Dorsolateral prefrontal cortex (tissue), 120 donors: ENCODE measurements at regions of chr5 and their contacts with region 1.

Region 1: DNA sequence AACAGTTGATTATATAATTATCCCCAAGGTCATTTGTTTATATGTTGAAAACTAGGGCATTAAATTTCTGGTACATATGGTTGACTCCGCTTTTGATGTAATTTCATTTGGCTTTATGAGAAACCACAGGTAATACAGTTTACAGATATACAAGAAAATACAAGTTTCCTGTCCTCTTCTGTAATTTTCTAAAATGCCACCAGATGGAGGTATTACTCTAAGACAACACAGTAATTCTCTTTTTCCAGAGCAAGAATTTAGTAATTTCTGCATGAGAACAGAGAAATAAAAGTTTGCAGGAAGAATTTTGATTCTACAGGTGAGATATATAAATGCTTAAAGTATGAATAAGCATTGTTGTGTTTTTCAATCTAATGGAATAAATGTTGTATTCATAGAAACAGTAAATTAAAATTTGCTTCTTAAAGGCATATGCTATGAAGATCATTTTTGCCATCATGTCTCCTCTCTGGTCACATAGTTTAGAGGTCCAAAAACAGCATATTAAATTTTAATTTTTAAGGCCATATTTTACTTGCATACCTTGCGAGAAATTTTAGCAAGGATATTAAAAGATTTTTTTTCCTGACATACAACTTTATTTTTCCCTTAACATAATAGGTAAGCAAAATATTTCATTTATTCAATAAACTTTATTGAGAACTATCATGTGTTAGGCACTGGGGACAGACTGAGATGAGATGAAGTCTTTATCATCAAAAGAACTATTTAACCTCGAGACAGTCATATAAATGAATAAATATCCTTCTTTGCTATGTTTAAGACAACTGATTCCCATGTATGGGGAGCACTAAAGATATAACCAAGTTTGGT is 22.7 kb downstream of the CHD1 start:
- DNase-seq: no peak
- H3K4me3 ChIP-seq: no peak overlapping the region
- H3K27ac ChIP-seq: peak overlapping the region in 1 of 59 donors; percentile 18
- H3K27me3 ChIP-seq: no peaks in the 10 kb centered on the region
- CTCF ChIP-seq: peak; percentile 67 to 97 (median 84)

Region 2: DNA sequence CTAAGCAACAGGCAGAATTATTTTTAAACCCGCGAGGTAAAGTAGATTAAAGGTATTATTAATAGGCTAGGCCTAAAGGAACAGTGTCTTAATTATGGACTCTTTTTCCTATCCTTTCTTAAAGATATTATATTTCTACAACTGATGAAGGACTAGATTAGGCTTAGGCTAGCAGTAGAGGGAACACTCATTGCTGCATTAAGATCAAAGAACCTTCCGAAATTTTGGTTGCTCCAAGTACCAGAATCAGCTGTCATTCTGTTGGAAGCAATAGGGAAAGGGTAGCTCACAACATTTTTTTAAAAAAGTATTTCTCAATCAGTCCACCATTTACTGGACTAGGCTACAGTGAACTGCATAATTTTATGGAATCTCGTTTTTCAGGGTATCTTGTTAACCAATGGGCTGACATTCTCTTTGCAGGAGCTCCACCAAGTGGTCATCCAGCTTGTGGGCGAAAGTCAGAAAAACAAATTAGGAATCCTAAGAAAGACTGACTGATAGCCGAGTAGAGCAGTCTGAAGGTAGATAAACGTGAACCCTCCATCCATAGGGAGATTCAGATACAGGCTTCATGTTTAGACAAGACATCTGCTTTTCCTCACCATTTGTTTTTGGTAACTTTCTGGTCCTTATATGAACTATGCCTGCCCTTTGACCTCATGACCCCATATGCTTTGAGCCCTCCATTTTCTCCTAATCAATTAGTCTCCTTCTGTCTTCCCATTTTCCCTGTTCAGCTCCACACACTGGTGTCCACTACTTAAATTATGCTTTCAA is 126.3 kb after region 1 on chr5:
- intact Hi-C with region 1: loop called (anchors 1 to 5 kb)
- DNase-seq: peak in 6 of 10 donors; percentile 38 to 72 (median 49)
- H3K4me3 ChIP-seq: peak overlapping the region in 38 of 59 donors; percentile 1 to 55 (median 40)
- H3K27ac ChIP-seq: peak overlapping the region in 12 of 59 donors; percentile 11 to 60 (median 31)
- H3K27me3 ChIP-seq: no peaks in the 10 kb centered on the region
- CTCF ChIP-seq: peak; percentile 47 to 92 (median 78)